ENCODE measurements at regions of chr6 and their contacts with region 1.

Region 1: GRCh38 chr6:31827286-31828079 is at the start of gene HSPA1B:
- DNase-seq: peak; percentile 97
- H3K4me3 Mint-ChIP-seq: peak within 1 kb of the TSS; percentile 86
- H3K27ac Mint-ChIP-seq: peak within 1 kb of the TSS; percentile 96
- H3K4me1 Mint-ChIP-seq: peaks cover 53% of the 10 kb centered on the region
- H3K27me3 Mint-ChIP-seq: no peaks in the 10 kb centered on the region
- total RNA-seq, gene HSPA1B: 44.0 to 47.2 TPM

Region 2: GRCh38 chr6:31739639-31740396 is 87.7 kb before region 1 on chr6 and contains the start of gene MSH5:
- CTCF ChIA-PET with region 1: interaction called, 14 read pairs
- POLR2A ChIA-PET with region 1: interaction called, 9 read pairs
- DNase-seq: peak; percentile 98
- H3K4me3 Mint-ChIP-seq: peak within 1 kb of the TSS; percentile 94
- H3K27ac Mint-ChIP-seq: peak within 1 kb of the TSS; percentile 96
- H3K4me1 Mint-ChIP-seq: peaks cover 56% of the 10 kb centered on the region
- H3K27me3 Mint-ChIP-seq: no peaks in the 10 kb centered on the region
- total RNA-seq, gene MSH5: 56.1 to 58.0 TPM

Region 3: DNA sequence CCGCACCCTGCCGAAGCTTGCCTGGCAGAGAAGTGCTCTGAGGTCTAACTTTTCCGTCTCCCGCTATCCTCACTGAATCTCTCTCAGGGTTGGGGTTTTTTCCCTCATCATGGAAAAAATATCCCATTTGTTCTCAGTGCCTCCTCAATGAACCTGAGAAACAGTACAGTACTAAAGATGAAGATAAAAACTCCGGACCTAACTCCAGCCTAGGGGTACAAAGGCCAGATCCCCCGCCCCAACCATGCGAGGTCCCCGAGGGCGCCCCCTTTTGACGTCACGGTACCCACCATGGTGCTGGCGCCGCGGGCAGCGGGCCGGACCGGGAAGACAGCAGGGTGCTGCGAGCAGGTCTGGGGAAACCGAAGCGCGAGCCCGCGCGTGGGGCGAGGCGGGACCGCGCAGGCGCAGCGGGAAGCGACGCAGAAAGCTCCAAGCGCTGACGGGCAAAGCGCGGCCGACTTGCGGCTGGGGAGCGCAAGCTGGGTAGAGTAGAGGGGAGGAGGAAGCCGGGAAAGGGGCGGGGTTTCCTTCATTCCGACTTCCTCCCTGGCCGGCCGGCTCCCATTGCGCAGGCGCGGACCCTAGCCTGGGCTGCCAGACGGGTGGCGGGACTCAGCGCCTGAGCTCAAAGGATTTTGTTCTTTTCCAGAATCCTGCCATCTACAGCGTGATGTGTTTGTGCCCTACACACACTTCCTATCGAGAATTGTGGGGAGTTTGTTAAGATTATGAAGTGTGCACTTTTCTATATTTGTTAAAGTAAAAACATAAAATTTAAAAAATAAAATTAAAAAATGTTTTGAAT is 20.8 kb before region 1 on chr6 and contains the start of gene LSM2:
- CTCF ChIA-PET with region 1: interaction called, 3 read pairs
- POLR2A ChIA-PET with region 1: interaction called, 13 read pairs
- DNase-seq: peak; percentile 97
- H3K4me3 Mint-ChIP-seq: peak within 1 kb of the TSS; percentile 94
- H3K27ac Mint-ChIP-seq: peak within 1 kb of the TSS; percentile 91
- H3K4me1 Mint-ChIP-seq: peaks cover 33% of the 10 kb centered on the region
- H3K27me3 Mint-ChIP-seq: no peaks in the 10 kb centered on the region
- total RNA-seq, gene LSM2: 103 to 109 TPM

Region 4: GRCh38 chr6:31837369-31838113 is 10.1 kb after region 1 on chr6:
- CTCF ChIA-PET with region 1: no interaction called
- POLR2A ChIA-PET with region 1: no interaction called
- DNase-seq: no peak
- H3K4me3 Mint-ChIP-seq: peak overlapping the region; percentile 97
- H3K27ac Mint-ChIP-seq: peak overlapping the region; percentile 97
- H3K4me1 Mint-ChIP-seq: peaks cover 34% of the 10 kb centered on the region
- H3K27me3 Mint-ChIP-seq: no peaks in the 10 kb centered on the region

Measured in activated CD4-positive, alpha-beta T cell treated with anti-CD3 and anti-CD28 coated beads, Interleukin-2, amount 10 ng/mL, durations not matched to agents 7 days and 5 days (primary cell).